Activated CD4-positive, alpha-beta T cell treated with anti-CD3 and anti-CD28 coated beads for 36 hours (primary cell): ENCODE measurements at regions of chrX and their contacts with region 1.

Region 1: GRCh38 chrX:103310542-103311398 is at the start of gene BEX2:
- DNase-seq: peak; percentile 91
- ATAC-seq: peak; percentile 99
- H3K4me3 Mint-ChIP-seq: peak within 1 kb of the TSS; percentile 66
- H3K27ac Mint-ChIP-seq: no peak within 1 kb of the TSS
- H3K4me1 Mint-ChIP-seq: peaks cover 4% of the 10 kb centered on the region
- H3K27me3 Mint-ChIP-seq: no peaks in the 10 kb centered on the region
- total RNA-seq, gene BEX2: 7.4 to 11.5 TPM

Region 2: DNA sequence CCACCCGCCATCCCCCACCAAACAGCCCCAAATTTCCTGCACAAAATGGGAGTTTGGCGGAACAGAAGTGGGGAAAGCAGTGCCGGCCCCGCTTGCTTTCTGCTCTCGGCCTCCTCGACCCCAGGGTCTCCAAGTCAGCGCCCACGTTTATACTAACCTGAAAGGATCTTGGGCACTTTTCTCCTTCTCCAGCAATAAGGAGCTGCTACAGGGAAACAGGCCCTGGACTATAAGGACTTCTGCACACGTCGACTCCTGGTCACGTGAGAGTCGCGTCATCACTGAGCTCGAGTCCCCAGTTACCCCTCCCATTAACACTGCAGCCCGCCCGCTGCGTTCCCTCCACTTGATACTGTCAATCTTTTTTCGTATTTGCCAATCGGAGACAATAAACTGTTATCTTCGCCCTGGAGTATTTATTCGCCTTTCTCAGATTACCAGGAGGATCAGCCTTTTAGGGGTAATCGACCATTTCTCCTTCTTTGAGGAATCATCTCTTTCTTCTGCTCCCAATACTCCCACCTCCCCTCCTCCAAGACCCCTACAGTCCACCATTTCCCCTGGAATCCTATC is 55.8 kb before region 1 on chrX and contains the start of gene TCEAL8:
- CTCF ChIA-PET with region 1: no interaction called
- POLR2A ChIA-PET with region 1: no interaction called
- intact Hi-C with region 1: loop called in 1 of 2 experiments (anchors 1 kb)
- DNase-seq: peak; percentile 82
- ATAC-seq: peak; percentile 92
- H3K4me3 Mint-ChIP-seq: peak within 1 kb of the TSS; percentile 95
- H3K27ac Mint-ChIP-seq: peak within 1 kb of the TSS; percentile 97
- H3K4me1 Mint-ChIP-seq: peaks cover 18% of the 10 kb centered on the region
- H3K27me3 Mint-ChIP-seq: no peaks in the 10 kb centered on the region
- total RNA-seq, gene TCEAL8: 36.0 to 46.6 TPM

Region 3: GRCh38 chrX:103640401-103641155 is 329.8 kb after region 1 on chrX:
- CTCF ChIA-PET with region 1: no interaction called
- POLR2A ChIA-PET with region 1: no interaction called
- intact Hi-C with region 1: no loop called
- DNase-seq: no peak
- ATAC-seq: no peak
- H3K4me3 Mint-ChIP-seq: no peak overlapping the region
- H3K27ac Mint-ChIP-seq: no peak overlapping the region
- H3K4me1 Mint-ChIP-seq: no peaks in the 10 kb centered on the region
- H3K27me3 Mint-ChIP-seq: peaks cover 3% of the 10 kb centered on the region